CD4-positive, alpha-beta T cell (primary cell): ENCODE measurements at regions of chr6 and their contacts with region 1.

Region 1: GRCh38 chr6:137218917-137219663 is at the start of gene IFNGR1:
- DNase-seq: peak; percentile 90 to 99 (median 95)
- ATAC-seq: peak; percentile 82
- H3K4me3 ChIP-seq: peak within 1 kb of the TSS; percentile 65
- H3K4me3 Mint-ChIP-seq: peak within 1 kb of the TSS; percentile 95
- H3K27ac ChIP-seq: peak within 1 kb of the TSS; percentile 90 to 91
- H3K27ac Mint-ChIP-seq: peak within 1 kb of the TSS; percentile 93
- H3K4me1 ChIP-seq: peaks cover 45% of the 10 kb centered on the region
- H3K4me1 Mint-ChIP-seq: peaks cover 61% of the 10 kb centered on the region
- H3K27me3 ChIP-seq: no peaks in the 10 kb centered on the region
- H3K27me3 Mint-ChIP-seq: no peaks in the 10 kb centered on the region
- CTCF ChIP-seq: no peak
- total RNA-seq, gene IFNGR1: 81.7 to 84.3 TPM

Region 2: DNA sequence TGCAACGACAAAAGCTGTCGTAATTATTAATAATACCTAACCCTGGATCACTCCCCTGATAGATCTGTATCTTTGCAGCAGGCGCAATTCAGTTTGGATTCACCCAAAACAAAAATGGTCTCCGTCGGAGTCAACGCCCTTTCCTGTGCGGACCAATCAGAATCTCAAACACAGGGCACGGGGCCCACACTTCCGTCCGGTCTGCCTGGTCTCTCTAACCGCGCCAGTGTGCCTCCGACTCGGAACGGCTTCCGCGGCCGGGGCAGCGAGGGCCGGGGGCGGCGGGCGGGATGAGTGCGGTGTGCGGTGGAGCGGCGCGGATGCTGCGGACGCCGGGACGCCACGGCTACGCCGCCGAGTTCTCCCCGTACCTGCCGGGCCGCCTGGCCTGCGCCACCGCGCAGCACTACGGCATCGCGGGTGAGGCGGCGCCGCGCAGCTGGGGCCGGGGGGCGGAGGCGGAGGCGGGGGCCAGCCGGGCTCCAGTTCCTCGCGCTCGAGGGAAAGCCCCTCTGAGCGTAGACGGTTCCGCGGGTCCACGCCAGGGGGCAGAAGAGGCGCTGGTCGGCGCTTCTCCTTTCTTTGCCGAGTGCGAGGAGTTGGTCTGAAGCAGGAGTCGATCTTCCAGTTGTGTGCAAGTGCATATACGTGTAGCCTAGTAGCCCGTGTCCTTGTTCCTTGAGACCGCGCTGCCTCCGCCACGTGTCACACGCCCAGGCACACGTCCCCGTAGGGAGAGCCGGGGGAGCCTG is 396.5 kb before region 1 on chr6 and contains the start of gene PEX7:
- CTCF ChIA-PET with region 1: no interaction called
- POLR2A ChIA-PET with region 1: interaction called, 3 read pairs
- intact Hi-C with region 1: loop called in 1 of 2 experiments (anchors 5 kb)
- DNase-seq: peak; percentile 71 to 95 (median 82)
- ATAC-seq: peak; percentile 90
- H3K4me3 ChIP-seq: peak within 1 kb of the TSS; percentile 73
- H3K4me3 Mint-ChIP-seq: peak within 1 kb of the TSS; percentile 95
- H3K27ac ChIP-seq: peak within 1 kb of the TSS; percentile 32 to 77
- H3K27ac Mint-ChIP-seq: peak within 1 kb of the TSS; percentile 90
- H3K4me1 ChIP-seq: peaks cover 12% of the 10 kb centered on the region
- H3K4me1 Mint-ChIP-seq: peaks cover 45% of the 10 kb centered on the region
- H3K27me3 ChIP-seq: no peaks in the 10 kb centered on the region
- H3K27me3 Mint-ChIP-seq: peaks cover 5% of the 10 kb centered on the region
- CTCF ChIP-seq: peak; percentile 66
- total RNA-seq, gene PEX7: 2.0 to 3.4 TPM

Region 3: GRCh38 chr6:137233911-137234863 is 15.1 kb after region 1 on chr6:
- CTCF ChIA-PET with region 1: interaction called, 3 read pairs
- POLR2A ChIA-PET with region 1: interaction called, 15 read pairs
- intact Hi-C with region 1: loop called in 1 of 2 experiments (anchors 2 kb)
- DNase-seq: peak in 5 of 14 experiments; percentile 2 to 74 (median 65)
- ATAC-seq: peak; percentile 78
- H3K4me3 ChIP-seq: no peak overlapping the region
- H3K4me3 Mint-ChIP-seq: peak overlapping the region; percentile 40
- H3K27ac ChIP-seq: peak overlapping the region in 1 of 2 donors; percentile 40
- H3K27ac Mint-ChIP-seq: peak overlapping the region; percentile 56
- H3K4me1 ChIP-seq: peaks cover 48% of the 10 kb centered on the region
- H3K4me1 Mint-ChIP-seq: peaks cover 54% of the 10 kb centered on the region
- H3K27me3 ChIP-seq: no peaks in the 10 kb centered on the region
- H3K27me3 Mint-ChIP-seq: no peaks in the 10 kb centered on the region
- CTCF ChIP-seq: no peak

Region 4: DNA sequence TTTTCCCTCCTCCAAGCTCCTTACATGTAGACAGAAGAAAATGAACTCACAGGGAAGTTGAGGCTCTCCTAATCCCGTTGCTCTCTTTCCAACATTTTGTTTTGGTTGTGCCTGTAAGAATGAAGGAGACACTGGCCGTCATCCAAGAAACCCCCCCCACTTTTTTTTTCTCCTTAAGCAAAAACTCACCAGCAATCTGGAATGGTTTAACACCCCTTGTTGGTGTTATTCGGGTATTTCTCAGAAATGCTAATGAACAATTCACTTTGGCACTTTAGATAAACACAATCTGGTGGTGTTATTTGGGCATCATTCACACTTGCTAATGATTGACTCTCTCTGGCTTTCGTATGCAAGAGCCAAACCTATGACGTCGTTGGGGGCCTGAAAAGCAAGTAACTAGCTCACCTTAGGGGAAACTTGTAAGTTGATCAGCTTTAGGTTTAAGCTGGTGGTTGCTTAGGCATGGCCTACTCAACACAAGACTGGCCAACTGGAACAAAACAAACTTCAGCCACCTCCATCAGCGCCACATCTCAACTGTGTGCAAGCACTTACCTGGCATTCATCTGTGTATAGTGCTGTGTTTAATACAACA is 299.4 kb after region 1 on chr6:
- CTCF ChIA-PET with region 1: no interaction called
- POLR2A ChIA-PET with region 1: no interaction called
- intact Hi-C with region 1: no loop called
- DNase-seq: no peak
- ATAC-seq: no peak
- H3K4me3 ChIP-seq: no peak overlapping the region
- H3K4me3 Mint-ChIP-seq: no peak overlapping the region
- H3K27ac ChIP-seq: no peak overlapping the region
- H3K27ac Mint-ChIP-seq: no peak overlapping the region
- H3K4me1 ChIP-seq: no peaks in the 10 kb centered on the region
- H3K4me1 Mint-ChIP-seq: no peaks in the 10 kb centered on the region
- H3K27me3 ChIP-seq: peaks cover 31 to 61% of the 10 kb centered on the region in 2 experiments
- H3K27me3 Mint-ChIP-seq: peaks cover 93% of the 10 kb centered on the region
- CTCF ChIP-seq: no peak

Region 5: DNA sequence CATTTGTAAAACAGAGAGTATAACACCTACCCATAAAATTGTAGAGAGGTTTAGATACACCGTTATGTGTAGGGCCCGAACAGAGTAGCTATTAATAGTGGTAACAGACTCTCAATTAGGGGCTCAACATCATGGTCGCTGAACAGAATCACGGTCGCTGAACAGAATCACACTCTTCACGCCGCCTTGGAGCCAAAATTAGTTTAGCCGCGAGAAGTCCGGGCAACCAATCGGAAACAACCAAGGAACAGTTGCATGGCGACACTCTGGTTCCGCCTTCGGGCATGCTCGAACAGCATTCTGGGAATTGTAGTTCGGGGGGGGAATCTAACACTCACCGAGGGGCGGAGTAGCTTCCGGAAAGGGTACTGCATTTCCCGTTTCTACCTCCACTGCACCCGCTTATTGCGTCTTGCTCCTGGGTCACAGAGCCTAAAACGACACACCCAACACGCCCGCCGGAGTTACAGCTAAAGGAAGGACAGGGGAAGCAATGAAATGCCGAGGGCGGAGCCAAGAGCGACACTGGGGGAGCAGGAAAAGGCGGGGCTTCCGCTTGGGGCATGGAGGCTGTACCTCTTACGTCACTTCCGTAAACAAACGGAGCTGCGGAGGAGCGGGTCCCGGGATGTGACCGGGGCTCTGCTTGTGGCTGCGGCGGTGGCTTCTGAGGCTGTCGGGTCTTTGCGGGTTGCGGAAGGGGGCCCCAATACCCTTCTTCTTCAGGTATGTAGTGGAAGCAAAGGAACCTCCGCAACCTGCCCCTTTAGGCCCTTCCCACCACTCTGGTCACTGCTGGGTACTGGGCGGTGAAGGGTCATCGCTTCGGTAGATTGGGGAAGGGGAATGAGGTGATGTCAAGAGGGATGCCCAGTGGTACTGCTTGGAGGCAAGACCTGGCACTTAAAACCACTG is 1554.3 kb after region 1 on chr6 and contains the start of gene CCDC28A:
- CTCF ChIA-PET with region 1: no interaction called
- POLR2A ChIA-PET with region 1: no interaction called
- intact Hi-C with region 1: loop called in 1 of 2 experiments (anchors 10 kb)
- DNase-seq: peak; percentile 87 to 97 (median 92)
- ATAC-seq: peak; percentile 84
- H3K4me3 ChIP-seq: peak within 1 kb of the TSS; percentile 85
- H3K4me3 Mint-ChIP-seq: peak within 1 kb of the TSS; percentile 98
- H3K27ac ChIP-seq: peak within 1 kb of the TSS; percentile 93 to 97
- H3K27ac Mint-ChIP-seq: peak within 1 kb of the TSS; percentile 98
- H3K4me1 ChIP-seq: peaks cover 11% of the 10 kb centered on the region
- H3K4me1 Mint-ChIP-seq: peaks cover 39% of the 10 kb centered on the region
- H3K27me3 ChIP-seq: no peaks in the 10 kb centered on the region
- H3K27me3 Mint-ChIP-seq: no peaks in the 10 kb centered on the region
- CTCF ChIP-seq: no peak
- total RNA-seq, gene CCDC28A: 36.9 to 37.2 TPM